CD8-positive, alpha-beta T cell (primary cell): ENCODE measurements at regions of chr14 and their contacts with region 1.

Region 1: DNA sequence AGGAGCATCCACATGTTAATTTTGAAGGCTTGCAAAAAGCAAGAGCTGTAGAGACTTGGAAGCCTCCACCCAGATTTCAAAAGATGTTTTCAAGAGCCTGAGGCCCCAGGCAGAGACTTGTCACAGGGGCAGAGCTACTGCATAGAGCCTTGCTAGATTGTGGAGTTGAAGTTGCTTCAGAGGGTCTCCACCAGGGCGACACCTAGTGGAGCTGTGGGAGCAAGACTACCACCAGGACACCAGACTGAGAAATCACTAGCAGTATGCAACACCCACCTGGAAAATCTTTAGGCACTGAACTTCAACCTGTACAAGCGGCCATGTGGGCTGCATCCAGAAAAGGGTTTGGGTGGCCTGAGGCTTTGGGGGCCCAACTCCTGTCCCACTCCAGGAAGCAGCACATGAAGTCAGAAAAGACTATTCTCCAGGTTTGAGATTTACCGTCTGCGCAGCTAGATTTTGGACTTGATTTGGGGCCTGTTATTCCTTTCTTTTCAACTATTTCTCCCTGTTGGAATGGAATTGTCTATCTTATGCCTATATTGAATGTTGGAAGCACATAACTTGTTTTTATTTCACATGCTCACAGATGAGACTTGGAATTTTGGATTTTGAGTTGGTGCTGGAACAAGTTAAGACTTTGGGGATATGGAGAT is 508.6 kb downstream of the FLRT2 start:
- DNase-seq: peak in 8 of 9 experiments; percentile 6 to 57 (median 31)
- ATAC-seq: peak; percentile 34
- H3K4me3 ChIP-seq: no peak overlapping the region
- H3K4me3 Mint-ChIP-seq: no peak overlapping the region
- H3K27ac ChIP-seq: no peak overlapping the region
- H3K27ac Mint-ChIP-seq: no peak overlapping the region
- H3K4me1 ChIP-seq: no peaks in the 10 kb centered on the region
- H3K4me1 Mint-ChIP-seq: no peaks in the 10 kb centered on the region
- H3K27me3 ChIP-seq: no peaks in the 10 kb centered on the region
- H3K27me3 Mint-ChIP-seq: no peaks in the 10 kb centered on the region
- CTCF ChIP-seq: peak; percentile 46

Region 2: DNA sequence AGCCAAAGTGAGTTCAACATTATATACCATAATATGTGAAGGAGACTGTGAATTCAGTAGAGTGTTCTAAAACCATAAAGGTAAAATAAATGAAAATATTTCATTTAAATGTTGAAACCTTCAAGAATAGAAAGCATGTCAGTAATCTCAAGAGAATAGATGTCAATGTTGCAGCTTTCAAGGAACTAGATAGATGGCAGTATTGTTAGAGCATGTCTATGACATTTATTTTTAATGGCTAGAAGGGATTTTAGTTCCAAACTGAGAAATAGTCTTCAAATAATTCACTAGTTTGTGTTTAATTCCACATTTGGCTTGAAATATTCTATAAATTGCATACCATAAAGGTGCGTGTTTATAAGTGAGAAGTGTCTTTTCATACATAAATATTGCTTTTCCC is 182.1 kb before region 1 on chr14:
- CTCF ChIA-PET with region 1: interaction called, 5 read pairs
- POLR2A ChIA-PET with region 1: no interaction called
- intact Hi-C with region 1: loop called (anchors 10 kb)
- DNase-seq: no peak
- ATAC-seq: no peak
- H3K4me3 ChIP-seq: no peak overlapping the region
- H3K4me3 Mint-ChIP-seq: no peak overlapping the region
- H3K27ac ChIP-seq: no peak overlapping the region
- H3K27ac Mint-ChIP-seq: no peak overlapping the region
- H3K4me1 ChIP-seq: no peaks in the 10 kb centered on the region
- H3K4me1 Mint-ChIP-seq: no peaks in the 10 kb centered on the region
- H3K27me3 ChIP-seq: no peaks in the 10 kb centered on the region
- H3K27me3 Mint-ChIP-seq: no peaks in the 10 kb centered on the region
- CTCF ChIP-seq: peak; percentile 28

Region 3: GRCh38 chr14:85867450-85867849 is 171.1 kb before region 1 on chr14:
- CTCF ChIA-PET with region 1: no interaction called
- POLR2A ChIA-PET with region 1: no interaction called
- intact Hi-C with region 1: loop called in 1 of 2 experiments (anchors 10 kb)
- DNase-seq: peak in 1 of 9 experiments; percentile 2
- ATAC-seq: no peak
- H3K4me3 ChIP-seq: no peak overlapping the region
- H3K4me3 Mint-ChIP-seq: no peak overlapping the region
- H3K27ac ChIP-seq: no peak overlapping the region
- H3K27ac Mint-ChIP-seq: no peak overlapping the region
- H3K4me1 ChIP-seq: no peaks in the 10 kb centered on the region
- H3K4me1 Mint-ChIP-seq: no peaks in the 10 kb centered on the region
- H3K27me3 ChIP-seq: no peaks in the 10 kb centered on the region
- H3K27me3 Mint-ChIP-seq: no peaks in the 10 kb centered on the region
- CTCF ChIP-seq: no peak

Region 4: GRCh38 chr14:86115972-86116371 is 77.5 kb after region 1 on chr14:
- CTCF ChIA-PET with region 1: no interaction called
- POLR2A ChIA-PET with region 1: no interaction called
- intact Hi-C with region 1: no loop called
- DNase-seq: no peak
- ATAC-seq: no peak
- H3K4me3 ChIP-seq: no peak overlapping the region
- H3K4me3 Mint-ChIP-seq: no peak overlapping the region
- H3K27ac ChIP-seq: no peak overlapping the region
- H3K27ac Mint-ChIP-seq: no peak overlapping the region
- H3K4me1 ChIP-seq: no peaks in the 10 kb centered on the region
- H3K4me1 Mint-ChIP-seq: no peaks in the 10 kb centered on the region
- H3K27me3 ChIP-seq: no peaks in the 10 kb centered on the region
- H3K27me3 Mint-ChIP-seq: no peaks in the 10 kb centered on the region
- CTCF ChIP-seq: no peak

Region 5: GRCh38 chr14:86639146-86639545 is 600.6 kb after region 1 on chr14:
- CTCF ChIA-PET with region 1: no interaction called
- POLR2A ChIA-PET with region 1: no interaction called
- intact Hi-C with region 1: no loop called
- DNase-seq: no peak
- ATAC-seq: no peak
- H3K4me3 ChIP-seq: no peak overlapping the region
- H3K4me3 Mint-ChIP-seq: no peak overlapping the region
- H3K27ac ChIP-seq: no peak overlapping the region
- H3K27ac Mint-ChIP-seq: no peak overlapping the region
- H3K4me1 ChIP-seq: no peaks in the 10 kb centered on the region
- H3K4me1 Mint-ChIP-seq: no peaks in the 10 kb centered on the region
- H3K27me3 ChIP-seq: peaks cover 0 to 2% of the 10 kb centered on the region in 2 experiments
- H3K27me3 Mint-ChIP-seq: no peaks in the 10 kb centered on the region
- CTCF ChIP-seq: no peak